Activated CD8-positive, alpha-beta memory T cell treated with anti-CD3 and anti-CD28 coated beads, Interleukin-2, amount 10 ng/mL, durations not matched to agents 7 days and 5 days (primary cell): ENCODE measurements at regions of chr4 and their contacts with region 1.

Region 1: GRCh38 chr4:75908555-75908954 is 6.3 kb upstream of the PPEF2 start:
- DNase-seq: no peak
- ATAC-seq: no peak
- H3K4me3 Mint-ChIP-seq: no peak overlapping the region
- H3K27ac Mint-ChIP-seq: no peak overlapping the region
- H3K4me1 Mint-ChIP-seq: no peaks in the 10 kb centered on the region
- H3K27me3 Mint-ChIP-seq: no peaks in the 10 kb centered on the region

Region 2: GRCh38 chr4:75817901-75818300 is 90.7 kb before region 1 on chr4:
- CTCF ChIA-PET with region 1: no interaction called
- DNase-seq: no peak
- ATAC-seq: no peak
- H3K4me3 Mint-ChIP-seq: no peak overlapping the region
- H3K27ac Mint-ChIP-seq: no peak overlapping the region
- H3K4me1 Mint-ChIP-seq: no peaks in the 10 kb centered on the region
- H3K27me3 Mint-ChIP-seq: no peaks in the 10 kb centered on the region

Region 3: DNA sequence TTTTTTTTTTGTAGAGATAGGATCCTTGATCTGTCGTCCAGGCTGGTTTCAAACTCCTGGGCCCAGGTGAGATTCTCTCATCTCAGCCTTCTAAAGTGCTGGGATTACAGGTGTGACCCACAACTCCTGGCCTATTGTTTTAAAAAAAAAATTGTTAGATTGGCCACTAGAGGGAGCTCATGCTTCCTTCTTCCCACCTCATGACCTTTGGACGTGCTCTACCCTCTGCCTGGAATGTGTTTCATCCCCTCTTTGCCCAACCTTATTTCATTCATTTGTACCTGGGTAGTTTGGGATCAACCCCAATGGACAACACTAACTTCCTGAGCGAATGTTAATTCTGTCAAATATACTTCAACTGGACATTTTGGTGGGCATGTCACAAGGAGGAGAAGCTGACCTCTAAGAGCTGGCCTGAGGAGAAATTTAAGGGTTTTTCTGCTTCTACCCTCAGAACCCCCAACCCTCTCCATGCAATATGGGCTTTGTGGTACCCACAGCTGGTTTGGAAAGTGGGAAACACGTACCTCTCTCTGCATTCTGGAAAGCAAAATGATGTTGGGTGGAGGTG is 12.7 kb before region 1 on chr4:
- CTCF ChIA-PET with region 1: interaction called, 18 read pairs
- DNase-seq: no peak
- ATAC-seq: peak; percentile 70
- H3K4me3 Mint-ChIP-seq: no peak overlapping the region
- H3K27ac Mint-ChIP-seq: no peak overlapping the region
- H3K4me1 Mint-ChIP-seq: no peaks in the 10 kb centered on the region
- H3K27me3 Mint-ChIP-seq: peaks cover 9% of the 10 kb centered on the region

Region 4: GRCh38 chr4:76156635-76157034 is 248.1 kb after region 1 on chr4:
- CTCF ChIA-PET with region 1: no interaction called
- DNase-seq: no peak
- ATAC-seq: no peak
- H3K4me3 Mint-ChIP-seq: no peak overlapping the region
- H3K27ac Mint-ChIP-seq: no peak overlapping the region
- H3K4me1 Mint-ChIP-seq: no peaks in the 10 kb centered on the region
- H3K27me3 Mint-ChIP-seq: no peaks in the 10 kb centered on the region

Region 5: DNA sequence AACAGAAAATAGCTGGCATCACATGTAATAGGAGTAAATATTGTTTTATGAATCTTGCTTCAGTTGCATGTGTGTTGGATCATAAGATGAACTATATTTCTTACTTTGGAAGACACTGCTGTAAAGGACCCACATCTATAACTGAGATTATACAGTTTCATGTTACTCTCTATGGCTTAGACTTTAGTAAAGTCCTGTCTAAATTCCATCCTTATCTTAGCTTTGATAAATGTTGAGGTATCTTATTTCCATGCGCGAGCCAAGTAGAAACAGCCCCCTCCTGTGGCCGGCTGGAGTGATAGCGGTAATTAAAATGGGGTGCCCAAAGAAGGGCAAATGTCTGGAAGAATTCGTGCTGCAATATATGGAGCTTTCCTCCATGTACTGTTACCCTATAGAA is 469.4 kb after region 1 on chr4:
- CTCF ChIA-PET with region 1: no interaction called
- DNase-seq: peak; percentile 64
- ATAC-seq: no peak
- H3K4me3 Mint-ChIP-seq: no peak overlapping the region
- H3K27ac Mint-ChIP-seq: no peak overlapping the region
- H3K4me1 Mint-ChIP-seq: no peaks in the 10 kb centered on the region
- H3K27me3 Mint-ChIP-seq: peaks cover 15% of the 10 kb centered on the region